ENCODE measurements at regions of chr4 and their contacts with region 1.

Region 1: GRCh38 chr4:101347557-101348366 is 436 bp upstream of the PPP3CA start:
- DNase-seq: peak; percentile 95 to 99 (median 98)
- ATAC-seq: peak; percentile 92
- H3K4me3 ChIP-seq: peak overlapping the region; percentile 99
- H3K4me3 Mint-ChIP-seq: peak overlapping the region; percentile 93 to 99 (median 98)
- H3K27ac ChIP-seq: peak overlapping the region; percentile 78
- H3K27ac Mint-ChIP-seq: peak overlapping the region; percentile 86 to 96 (median 93)
- H3K4me1 ChIP-seq: peaks cover 7 to 15% of the 10 kb centered on the region in 2 donors
- H3K4me1 Mint-ChIP-seq: peaks cover 23 to 40% (median 35%) of the 10 kb centered on the region in 7 donors
- H3K27me3 ChIP-seq: no peaks in the 10 kb centered on the region
- H3K27me3 Mint-ChIP-seq: peaks cover 5 to 63% (median 17%) of the 10 kb centered on the region in 5 donors

Region 2: GRCh38 chr4:100093091-100093866 is 1254.5 kb before region 1 on chr4:
- CTCF ChIA-PET with region 1: interaction called, 3 read pairs
- POLR2A ChIA-PET with region 1: no interaction called
- intact Hi-C with region 1: loop called (anchors 1 kb)
- DNase-seq: peak; percentile 42 to 96 (median 89)
- ATAC-seq: peak; percentile 99
- H3K4me3 ChIP-seq: no peak overlapping the region
- H3K4me3 Mint-ChIP-seq: peak overlapping the region in 4 of 10 donors; percentile 8 to 70 (median 48)
- H3K27ac ChIP-seq: peak overlapping the region; percentile 55
- H3K27ac Mint-ChIP-seq: peak overlapping the region; percentile 77 to 99 (median 95)
- H3K4me1 ChIP-seq: peaks cover 0 to 16% of the 10 kb centered on the region in 2 donors
- H3K4me1 Mint-ChIP-seq: peaks cover 9 to 48% (median 20%) of the 10 kb centered on the region in 7 donors
- H3K27me3 ChIP-seq: no peaks in the 10 kb centered on the region
- H3K27me3 Mint-ChIP-seq: no peaks in the 10 kb centered on the region

Region 3: GRCh38 chr4:101187841-101188240 is 159.9 kb before region 1 on chr4:
- CTCF ChIA-PET with region 1: interaction called, 3 read pairs
- POLR2A ChIA-PET with region 1: no interaction called
- intact Hi-C with region 1: loop called in 1 of 2 experiments (anchors 1 kb)
- DNase-seq: peak in 4 of 9 donors; percentile 7 to 27 (median 15)
- ATAC-seq: peak; percentile 42
- H3K4me3 ChIP-seq: no peak overlapping the region
- H3K4me3 Mint-ChIP-seq: peak overlapping the region in 1 of 10 donors; percentile 25
- H3K27ac ChIP-seq: no peak overlapping the region
- H3K27ac Mint-ChIP-seq: no peak overlapping the region
- H3K4me1 ChIP-seq: no peaks in the 10 kb centered on the region
- H3K4me1 Mint-ChIP-seq: peaks cover 7 to 41% (median 17%) of the 10 kb centered on the region in 7 donors
- H3K27me3 ChIP-seq: no peaks in the 10 kb centered on the region
- H3K27me3 Mint-ChIP-seq: no peaks in the 10 kb centered on the region

Region 4: DNA sequence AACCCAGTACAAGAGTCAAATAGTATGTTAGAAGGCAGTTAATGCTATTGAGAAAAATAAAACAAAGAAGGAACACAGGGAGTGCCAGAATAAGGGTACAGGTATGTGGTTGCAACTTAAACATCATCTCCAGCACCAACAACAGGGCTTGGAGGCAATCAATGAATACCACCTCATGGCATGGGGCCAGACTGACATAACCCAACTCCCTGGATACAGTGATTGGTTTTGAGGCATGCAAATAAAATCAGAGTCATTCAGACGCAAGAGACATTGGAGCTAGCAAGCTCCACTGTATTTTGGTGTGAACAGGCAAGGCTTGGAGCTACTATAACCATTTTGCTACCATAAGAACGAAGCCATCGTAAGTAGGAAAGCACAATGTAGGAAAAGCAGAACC is 57.1 kb before region 1 on chr4:
- CTCF ChIA-PET with region 1: no interaction called
- POLR2A ChIA-PET with region 1: no interaction called
- intact Hi-C with region 1: no loop called
- DNase-seq: no peak
- ATAC-seq: no peak
- H3K4me3 ChIP-seq: no peak overlapping the region
- H3K4me3 Mint-ChIP-seq: no peak overlapping the region
- H3K27ac ChIP-seq: no peak overlapping the region
- H3K27ac Mint-ChIP-seq: no peak overlapping the region
- H3K4me1 ChIP-seq: no peaks in the 10 kb centered on the region
- H3K4me1 Mint-ChIP-seq: peaks cover 8 to 51% (median 40%) of the 10 kb centered on the region in 7 donors
- H3K27me3 ChIP-seq: no peaks in the 10 kb centered on the region
- H3K27me3 Mint-ChIP-seq: peaks cover 0 to 4% (median 0%) of the 10 kb centered on the region in 5 donors

Region 5: DNA sequence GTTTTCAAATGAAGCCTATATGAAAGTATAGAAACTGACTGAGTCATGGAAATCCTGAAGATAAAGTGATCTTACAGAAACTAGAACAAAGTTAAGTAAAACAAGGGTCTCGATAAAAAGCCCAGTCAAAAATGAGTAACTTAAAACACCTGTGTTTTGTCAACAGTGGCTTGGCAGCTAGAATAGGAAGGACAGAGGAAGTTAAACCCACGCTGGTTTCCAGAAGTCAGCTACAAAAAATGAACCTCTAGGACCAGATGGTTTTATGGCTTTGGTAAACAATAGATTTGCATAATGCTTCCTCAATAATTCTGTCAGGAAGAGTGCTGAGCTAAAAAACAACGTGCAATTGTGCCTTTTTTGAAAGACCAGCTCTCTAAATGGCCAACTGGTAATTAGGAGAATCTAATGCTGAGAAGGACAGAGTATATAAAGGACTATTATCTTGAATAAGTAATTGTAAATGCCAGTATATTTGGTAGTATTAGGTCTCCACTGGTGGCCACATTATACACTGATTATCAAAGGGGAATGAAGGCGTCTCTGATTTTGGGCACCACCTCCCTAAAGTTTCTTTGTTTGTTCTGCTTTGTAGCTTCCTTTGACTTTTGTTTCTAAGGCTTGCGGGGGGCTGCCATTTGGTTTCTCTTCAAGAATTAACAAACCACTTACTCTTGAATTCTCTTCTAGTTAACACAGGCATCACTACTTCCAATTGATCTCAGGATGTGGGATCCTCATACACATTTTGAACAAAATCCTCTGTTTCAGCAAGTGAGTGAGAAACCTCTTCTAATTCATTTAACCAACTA is 71.8 kb after region 1 on chr4:
- CTCF ChIA-PET with region 1: interaction called, 5 read pairs
- POLR2A ChIA-PET with region 1: no interaction called
- intact Hi-C with region 1: loop called (anchors 1 kb)
- DNase-seq: peak in 5 of 9 donors; percentile 7 to 26 (median 24)
- ATAC-seq: no peak
- H3K4me3 ChIP-seq: no peak overlapping the region
- H3K4me3 Mint-ChIP-seq: peak overlapping the region in 6 of 10 donors; percentile 1 to 70 (median 12)
- H3K27ac ChIP-seq: no peak overlapping the region
- H3K27ac Mint-ChIP-seq: peak overlapping the region in 2 of 9 donors; percentile 41 to 65
- H3K4me1 ChIP-seq: peaks cover 33 to 36% of the 10 kb centered on the region in 2 donors
- H3K4me1 Mint-ChIP-seq: peaks cover 26 to 53% (median 39%) of the 10 kb centered on the region in 7 donors
- H3K27me3 ChIP-seq: peaks cover 0 to 11% of the 10 kb centered on the region in 2 donors
- H3K27me3 Mint-ChIP-seq: peaks cover 32 to 62% (median 41%) of the 10 kb centered on the region in 5 donors

Region 6: GRCh38 chr4:102439236-102439614 is 1091.5 kb after region 1 on chr4:
- CTCF ChIA-PET with region 1: no interaction called
- POLR2A ChIA-PET with region 1: no interaction called
- intact Hi-C with region 1: loop called in 1 of 2 experiments (anchors 10 kb)
- DNase-seq: no peak
- ATAC-seq: no peak
- H3K4me3 ChIP-seq: no peak overlapping the region
- H3K4me3 Mint-ChIP-seq: no peak overlapping the region
- H3K27ac ChIP-seq: no peak overlapping the region
- H3K27ac Mint-ChIP-seq: peak overlapping the region in 1 of 9 donors; percentile 29
- H3K4me1 ChIP-seq: no peaks in the 10 kb centered on the region
- H3K4me1 Mint-ChIP-seq: peaks cover 0 to 3% (median 0%) of the 10 kb centered on the region in 7 donors
- H3K27me3 ChIP-seq: no peaks in the 10 kb centered on the region
- H3K27me3 Mint-ChIP-seq: peaks cover 0 to 9% (median 0%) of the 10 kb centered on the region in 5 donors

Region 7: GRCh38 chr4:103019308-103020124 is 1671.8 kb after region 1 on chr4 and contains the start of gene SLC9B1:
- CTCF ChIA-PET with region 1: no interaction called
- POLR2A ChIA-PET with region 1: no interaction called
- intact Hi-C with region 1: loop called in 1 of 2 experiments (anchors 5 kb)
- DNase-seq: peak; percentile 87 to 95 (median 92)
- ATAC-seq: peak; percentile 98
- H3K4me3 ChIP-seq: peak within 1 kb of the TSS; percentile 48
- H3K4me3 Mint-ChIP-seq: peak within 1 kb of the TSS; percentile 84 to 98 (median 93)
- H3K27ac ChIP-seq: peak within 1 kb of the TSS; percentile 80
- H3K27ac Mint-ChIP-seq: peak within 1 kb of the TSS in 6 of 9 donors; percentile 96 to 99 (median 98)
- H3K4me1 ChIP-seq: peaks cover 13 to 14% of the 10 kb centered on the region in 2 donors
- H3K4me1 Mint-ChIP-seq: peaks cover 0 to 29% (median 20%) of the 10 kb centered on the region in 7 donors
- H3K27me3 ChIP-seq: no peaks in the 10 kb centered on the region
- H3K27me3 Mint-ChIP-seq: no peaks in the 10 kb centered on the region
- total RNA-seq, gene SLC9B1: 1.4 to 7.2 (median 3.9) TPM